ENCODE measurements at regions of chr12 and their contacts with region 1.

Region 1: GRCh38 chr12:75994186-75994731 is 37.3 kb downstream of the PHLDA1 start:
- DNase-seq: peak; percentile 45
- H3K4me3 Mint-ChIP-seq: no peak overlapping the region
- H3K27ac Mint-ChIP-seq: peak overlapping the region; percentile 70
- H3K4me1 Mint-ChIP-seq: peaks cover 29% of the 10 kb centered on the region
- H3K27me3 Mint-ChIP-seq: no peaks in the 10 kb centered on the region

Region 2: DNA sequence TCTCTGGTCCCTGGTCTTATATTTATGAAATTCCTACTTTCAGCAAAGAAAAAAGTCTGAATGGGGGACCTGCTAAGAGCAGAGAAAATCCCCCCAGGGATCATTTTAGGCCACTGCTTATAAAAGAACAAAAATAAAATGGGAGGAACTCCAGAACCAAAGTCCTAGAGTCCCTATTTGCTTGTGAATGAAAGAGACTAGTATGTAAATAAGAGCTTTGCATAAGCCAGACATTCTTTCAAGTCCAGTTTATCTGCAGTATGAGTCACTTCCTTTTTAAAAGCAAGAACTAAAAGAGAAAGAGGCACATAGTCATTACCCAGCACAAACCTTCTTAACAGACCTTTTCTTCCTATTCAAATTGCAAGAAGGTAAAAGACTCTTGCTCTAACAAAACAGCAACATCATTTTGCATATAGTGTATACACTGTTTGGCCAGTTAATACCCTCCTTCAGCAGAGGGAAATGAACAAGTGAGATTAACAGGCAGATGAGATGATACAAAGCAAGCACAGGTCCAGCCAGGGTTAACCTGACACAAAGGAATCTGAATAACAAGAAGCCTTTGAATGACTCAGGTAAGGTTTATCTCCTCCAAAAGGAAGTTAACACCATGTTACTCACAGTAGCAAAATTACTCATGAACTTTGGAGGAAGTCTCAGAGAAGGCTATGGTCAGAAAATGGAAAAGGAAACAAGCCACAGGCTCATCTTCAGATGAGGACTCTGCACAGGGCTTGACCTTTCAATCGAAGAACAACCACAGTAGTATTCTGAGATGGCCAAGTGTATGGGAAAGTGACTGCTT is 50.0 kb before region 1 on chr12:
- CTCF ChIA-PET with region 1: no interaction called
- POLR2A ChIA-PET with region 1: interaction called, 3 read pairs
- intact Hi-C with region 1: loop called (anchors 1 kb)
- DNase-seq: peak; percentile 42
- H3K4me3 Mint-ChIP-seq: peak overlapping the region; percentile 34
- H3K27ac Mint-ChIP-seq: peak overlapping the region; percentile 95
- H3K4me1 Mint-ChIP-seq: peaks cover 29% of the 10 kb centered on the region
- H3K27me3 Mint-ChIP-seq: no peaks in the 10 kb centered on the region

Region 3: GRCh38 chr12:75964150-75964549 is 30.1 kb before region 1 on chr12:
- CTCF ChIA-PET with region 1: no interaction called
- POLR2A ChIA-PET with region 1: no interaction called
- intact Hi-C with region 1: no loop called
- DNase-seq: no peak
- H3K4me3 Mint-ChIP-seq: no peak overlapping the region
- H3K27ac Mint-ChIP-seq: no peak overlapping the region
- H3K4me1 Mint-ChIP-seq: peaks cover 27% of the 10 kb centered on the region
- H3K27me3 Mint-ChIP-seq: no peaks in the 10 kb centered on the region

Measured in activated CD4-positive, alpha-beta memory T cell treated with anti-CD3 and anti-CD28 coated beads for 36 hours (primary cell).